Naive thymus-derived CD4-positive, alpha-beta T cell (primary cell): ENCODE measurements at regions of chr7 and their contacts with region 1.

Region 1: GRCh38 chr7:110568932-110569331 is 522.0 kb upstream of the LRRN3 start:
- DNase-seq: no peak
- ATAC-seq: no peak
- H3K4me3 ChIP-seq: no peak overlapping the region
- H3K4me3 Mint-ChIP-seq: no peak overlapping the region
- H3K27ac ChIP-seq: no peak overlapping the region
- H3K27ac Mint-ChIP-seq: no peak overlapping the region
- H3K4me1 ChIP-seq: no peaks in the 10 kb centered on the region
- H3K4me1 Mint-ChIP-seq: no peaks in the 10 kb centered on the region
- H3K27me3 ChIP-seq: no peaks in the 10 kb centered on the region
- H3K27me3 Mint-ChIP-seq: peaks cover 0 to 3% (median 0%) of the 10 kb centered on the region in 5 donors

Region 2: DNA sequence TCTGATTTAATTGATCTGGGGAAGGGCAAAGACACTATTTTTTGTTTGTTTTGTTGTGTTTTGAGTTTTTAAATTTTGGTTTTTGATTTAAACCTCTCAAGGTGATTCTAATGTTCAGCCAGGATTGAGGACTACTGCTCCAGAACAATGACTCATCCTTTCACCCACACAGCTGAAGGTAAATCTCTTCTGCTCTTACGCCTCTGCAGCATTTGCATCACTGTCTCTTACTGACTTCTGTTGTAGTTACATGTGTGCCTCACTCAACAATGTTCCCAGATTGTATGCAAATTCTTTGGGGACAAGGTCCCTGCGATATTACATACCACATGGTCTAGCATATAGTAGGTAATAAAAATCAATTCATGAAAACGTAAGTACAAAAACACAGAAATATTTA is 54.5 kb after region 1 on chr7:
- CTCF ChIA-PET with region 1: no interaction called
- POLR2A ChIA-PET with region 1: no interaction called
- intact Hi-C with region 1: no loop called
- DNase-seq: no peak
- ATAC-seq: no peak
- H3K4me3 ChIP-seq: no peak overlapping the region
- H3K4me3 Mint-ChIP-seq: no peak overlapping the region
- H3K27ac ChIP-seq: no peak overlapping the region
- H3K27ac Mint-ChIP-seq: no peak overlapping the region
- H3K4me1 ChIP-seq: no peaks in the 10 kb centered on the region
- H3K4me1 Mint-ChIP-seq: no peaks in the 10 kb centered on the region
- H3K27me3 ChIP-seq: no peaks in the 10 kb centered on the region
- H3K27me3 Mint-ChIP-seq: peaks cover 0 to 12% (median 0%) of the 10 kb centered on the region in 5 donors

Region 3: DNA sequence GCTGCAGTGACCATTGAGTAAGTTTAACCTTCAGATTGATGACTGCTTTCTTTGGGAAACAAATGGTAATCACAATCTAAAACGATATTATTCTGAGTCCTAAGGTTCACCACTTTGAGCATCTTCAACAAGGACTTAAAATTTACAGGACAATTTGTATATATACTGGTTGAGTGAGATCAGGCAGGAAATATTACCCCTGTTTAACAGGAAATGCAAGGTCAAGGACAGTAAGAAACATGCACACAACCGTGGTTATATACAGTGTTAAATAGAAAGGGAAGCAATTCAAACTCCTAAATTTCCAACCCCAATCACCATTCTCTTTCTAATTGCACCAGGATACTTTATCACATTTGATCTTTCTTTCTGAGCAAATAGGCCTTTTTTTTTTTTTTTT is 1733.6 kb after region 1 on chr7:
- CTCF ChIA-PET with region 1: no interaction called
- POLR2A ChIA-PET with region 1: no interaction called
- intact Hi-C with region 1: loop called in 1 of 2 experiments (anchors 10 kb)
- DNase-seq: no peak
- ATAC-seq: no peak
- H3K4me3 ChIP-seq: no peak overlapping the region
- H3K4me3 Mint-ChIP-seq: no peak overlapping the region
- H3K27ac ChIP-seq: no peak overlapping the region
- H3K27ac Mint-ChIP-seq: no peak overlapping the region
- H3K4me1 ChIP-seq: no peaks in the 10 kb centered on the region
- H3K4me1 Mint-ChIP-seq: peaks cover 0 to 18% (median 13%) of the 10 kb centered on the region in 7 donors
- H3K27me3 ChIP-seq: no peaks in the 10 kb centered on the region
- H3K27me3 Mint-ChIP-seq: no peaks in the 10 kb centered on the region